ENCODE measurements at regions of chr5 and their contacts with region 1.

Region 1: GRCh38 chr5:159456722-159457465 is 126.6 kb upstream of the IL12B start:
- DNase-seq: peak; percentile 59
- H3K4me3 Mint-ChIP-seq: peak overlapping the region; percentile 46
- H3K27ac Mint-ChIP-seq: peak overlapping the region; percentile 88
- H3K4me1 Mint-ChIP-seq: peaks cover 50% of the 10 kb centered on the region
- H3K27me3 Mint-ChIP-seq: peaks cover 50% of the 10 kb centered on the region

Region 2: GRCh38 chr5:158819840-158820620 is 636.9 kb before region 1 on chr5:
- intact Hi-C with region 1: loop called (anchors 1 kb)
- DNase-seq: no peak
- H3K4me3 Mint-ChIP-seq: no peak overlapping the region
- H3K27ac Mint-ChIP-seq: peak overlapping the region; percentile 80
- H3K4me1 Mint-ChIP-seq: peaks cover 55% of the 10 kb centered on the region
- H3K27me3 Mint-ChIP-seq: no peaks in the 10 kb centered on the region

Region 3: GRCh38 chr5:159178978-159179377 is 277.9 kb before region 1 on chr5:
- intact Hi-C with region 1: loop called (anchors 2 kb)
- DNase-seq: no peak
- H3K4me3 Mint-ChIP-seq: peak overlapping the region; percentile 66
- H3K27ac Mint-ChIP-seq: peak overlapping the region; percentile 91
- H3K4me1 Mint-ChIP-seq: peaks cover 93% of the 10 kb centered on the region
- H3K27me3 Mint-ChIP-seq: no peaks in the 10 kb centered on the region

Region 4: DNA sequence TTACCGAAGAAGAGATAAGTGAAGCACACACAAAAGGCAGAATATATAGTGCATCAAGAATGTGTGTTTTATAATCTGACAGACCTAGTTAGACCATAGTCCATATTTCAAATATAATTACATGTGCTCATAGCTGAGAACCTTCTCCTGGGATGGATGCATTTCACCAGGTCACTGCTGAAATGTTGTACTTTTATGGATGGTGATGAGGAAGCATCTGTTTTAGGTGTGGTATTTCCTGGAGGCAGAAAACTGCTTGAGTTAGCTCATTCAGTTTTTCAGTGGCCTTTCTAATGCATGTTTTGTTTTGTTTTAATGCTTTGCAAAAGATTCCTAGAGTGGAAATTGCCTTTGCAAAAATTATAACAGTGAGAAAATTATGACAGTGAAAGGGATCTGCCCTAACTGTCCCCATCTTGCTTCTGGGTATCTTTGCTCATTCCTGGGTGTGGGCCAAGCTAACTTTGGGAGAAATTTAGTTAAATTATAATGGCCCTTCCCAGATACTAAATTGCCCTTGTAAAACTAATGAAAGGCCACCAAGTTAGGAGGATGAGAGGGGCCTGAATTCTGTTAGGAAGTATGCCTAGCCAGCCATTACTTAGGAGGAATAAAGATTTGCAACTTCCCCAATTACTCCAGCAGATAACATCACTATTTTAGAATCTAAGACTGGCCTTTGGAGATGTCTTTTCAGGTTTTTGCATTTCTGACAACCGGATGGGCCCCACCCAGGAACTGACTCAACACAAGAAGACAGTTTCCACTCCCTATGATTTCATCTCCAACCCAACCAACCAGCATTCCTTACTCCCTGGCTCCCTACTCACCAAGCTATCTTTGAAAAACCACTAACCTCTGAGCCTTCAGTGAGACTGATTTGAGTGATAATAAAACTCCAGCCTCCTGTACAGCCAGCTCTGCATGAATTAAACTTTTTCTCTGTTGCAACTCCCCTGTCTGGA is 119.6 kb before region 1 on chr5:
- intact Hi-C with region 1: loop called (anchors 1 kb)
- DNase-seq: peak; percentile 66
- H3K4me3 Mint-ChIP-seq: peak overlapping the region; percentile 43
- H3K27ac Mint-ChIP-seq: peak overlapping the region; percentile 50
- H3K4me1 Mint-ChIP-seq: peaks cover 87% of the 10 kb centered on the region
- H3K27me3 Mint-ChIP-seq: no peaks in the 10 kb centered on the region

Region 5: GRCh38 chr5:159489779-159490178 is 32.9 kb after region 1 on chr5:
- intact Hi-C with region 1: no loop called
- DNase-seq: no peak
- H3K4me3 Mint-ChIP-seq: no peak overlapping the region
- H3K27ac Mint-ChIP-seq: no peak overlapping the region
- H3K4me1 Mint-ChIP-seq: no peaks in the 10 kb centered on the region
- H3K27me3 Mint-ChIP-seq: peaks cover 34% of the 10 kb centered on the region

Region 6: GRCh38 chr5:159515909-159516415 is 59.1 kb after region 1 on chr5:
- intact Hi-C with region 1: loop called (anchors 2 kb)
- DNase-seq: peak; percentile 53
- H3K4me3 Mint-ChIP-seq: no peak overlapping the region
- H3K27ac Mint-ChIP-seq: peak overlapping the region; percentile 41
- H3K4me1 Mint-ChIP-seq: peaks cover 12% of the 10 kb centered on the region
- H3K27me3 Mint-ChIP-seq: peaks cover 35% of the 10 kb centered on the region

Region 7: DNA sequence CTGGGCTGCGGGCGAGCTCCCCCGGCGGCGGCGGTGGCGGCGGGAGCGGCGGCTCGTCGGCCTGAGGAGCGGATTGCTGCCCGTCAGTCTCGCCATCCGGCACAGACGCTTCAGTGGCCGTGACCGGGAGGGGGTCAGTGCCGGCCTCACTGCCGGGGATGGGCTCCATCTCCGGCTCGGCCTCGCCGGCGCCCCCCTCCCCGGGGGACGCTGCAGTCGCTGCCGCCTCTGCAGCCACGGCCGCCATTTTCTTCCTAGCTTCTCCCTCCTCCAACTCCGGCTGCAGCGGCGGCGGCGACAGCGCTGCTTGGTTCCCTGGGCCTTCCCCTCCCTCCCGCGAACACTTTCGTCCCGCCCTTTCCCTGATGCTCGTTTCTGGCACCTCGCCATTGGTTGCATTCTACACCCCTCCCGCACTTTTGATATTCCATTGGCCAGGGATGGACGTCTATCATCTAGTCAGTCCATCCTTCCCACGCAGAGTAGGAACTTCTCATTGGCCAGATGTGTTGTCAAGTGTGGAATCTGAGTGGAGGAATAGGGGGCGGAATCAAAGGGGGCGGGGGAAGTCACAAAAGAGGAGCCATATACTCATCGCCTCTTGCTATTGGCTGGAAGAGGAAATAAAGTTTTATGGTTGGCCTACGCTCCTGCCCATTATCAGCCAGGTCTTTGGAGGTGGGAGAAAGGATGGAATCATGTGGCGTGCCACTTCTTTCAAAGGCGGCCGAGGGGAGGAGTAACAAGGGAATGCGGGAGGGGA is 662.4 kb after region 1 on chr5 and contains the start of gene PWWP2A:
- intact Hi-C with region 1: loop called (anchors 5 kb)
- DNase-seq: peak; percentile 96
- H3K4me3 Mint-ChIP-seq: peak within 1 kb of the TSS; percentile 95
- H3K27ac Mint-ChIP-seq: peak within 1 kb of the TSS; percentile 96
- H3K4me1 Mint-ChIP-seq: peaks cover 15% of the 10 kb centered on the region
- H3K27me3 Mint-ChIP-seq: peaks cover 4% of the 10 kb centered on the region
- total RNA-seq, gene PWWP2A: 29.7 and 30.2 TPM in 2 replicates

Measured in activated T-helper 1 cell treated with anti-CD3 and anti-CD28 coated beads, Interleukin-12 subunit alpha, Interleukin-12 subunit beta, Interleukin-2, Interleukin-4 antibody, amounts not matched to agents 30 ng/mL and 10 ng/mL and 1 ng/mL, durations not matched to agents 14 hours and 24 hours and 36 hours (primary cell).